ENCODE measurements at regions of chr1 and their contacts with region 1.

Region 1: GRCh38 chr1:24201941-24202440 is 14.9 kb upstream of the IFNLR1 start:
- DNase-seq: peak; percentile 56 to 93
- H3K4me3 ChIP-seq: no peak overlapping the region
- H3K27ac ChIP-seq: no peak overlapping the region
- H3K4me1 ChIP-seq: peaks cover 0 to 4% (median 2%) of the 10 kb centered on the region in 4 experiments; a peak in 2 of 7 replicates
- H3K27me3 ChIP-seq: no peaks in the 10 kb centered on the region
- CTCF ChIP-seq: peak; percentile 66 to 91 (median 83)
- EP300 ChIP-seq: no peak
- POLR2A ChIP-seq: no peak
- RAD21 ChIP-seq: peak; percentile 94 to 95

Region 2: DNA sequence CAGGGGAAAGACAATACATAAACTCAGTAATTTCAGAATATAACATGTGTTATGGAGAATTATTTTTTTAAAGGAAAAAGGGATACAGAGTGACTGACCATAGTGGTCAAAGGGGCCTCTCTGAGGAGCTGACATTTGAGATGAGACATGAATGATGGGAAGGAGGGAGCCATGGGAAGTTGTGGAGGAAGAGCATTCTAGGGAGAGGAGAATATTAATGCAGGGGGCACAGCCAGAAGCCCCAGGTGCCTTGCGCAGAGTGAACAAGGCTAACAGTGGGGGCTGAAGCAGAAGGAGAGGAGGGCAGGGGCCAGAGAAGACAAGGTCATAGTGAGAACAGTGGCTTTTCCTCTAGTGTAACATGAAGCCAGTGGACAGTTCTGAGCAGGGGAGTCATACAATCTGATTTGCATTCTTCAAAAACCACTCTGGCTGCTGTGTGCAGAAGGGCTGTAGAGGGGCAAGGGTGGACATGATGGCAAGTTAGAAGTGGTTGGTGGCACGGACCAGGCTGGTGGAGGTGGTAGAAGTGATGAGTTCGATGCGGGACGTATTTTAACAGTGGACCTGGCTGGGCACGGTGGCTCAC is 13.3 kb after region 1 on chr1:
- CTCF ChIA-PET with region 1: interaction called, 37 read pairs
- POLR2A ChIA-PET with region 1: no interaction called
- DNase-seq: no peak
- H3K4me3 ChIP-seq: no peak overlapping the region
- H3K27ac ChIP-seq: no peak overlapping the region
- H3K4me1 ChIP-seq: peaks cover 0 to 6% (median 2%) of the 10 kb centered on the region in 4 experiments; a peak in 3 of 7 replicates
- H3K27me3 ChIP-seq: no peaks in the 10 kb centered on the region
- CTCF ChIP-seq: no peak
- EP300 ChIP-seq: no peak
- POLR2A ChIP-seq: no peak
- RAD21 ChIP-seq: no peak

Region 3: DNA sequence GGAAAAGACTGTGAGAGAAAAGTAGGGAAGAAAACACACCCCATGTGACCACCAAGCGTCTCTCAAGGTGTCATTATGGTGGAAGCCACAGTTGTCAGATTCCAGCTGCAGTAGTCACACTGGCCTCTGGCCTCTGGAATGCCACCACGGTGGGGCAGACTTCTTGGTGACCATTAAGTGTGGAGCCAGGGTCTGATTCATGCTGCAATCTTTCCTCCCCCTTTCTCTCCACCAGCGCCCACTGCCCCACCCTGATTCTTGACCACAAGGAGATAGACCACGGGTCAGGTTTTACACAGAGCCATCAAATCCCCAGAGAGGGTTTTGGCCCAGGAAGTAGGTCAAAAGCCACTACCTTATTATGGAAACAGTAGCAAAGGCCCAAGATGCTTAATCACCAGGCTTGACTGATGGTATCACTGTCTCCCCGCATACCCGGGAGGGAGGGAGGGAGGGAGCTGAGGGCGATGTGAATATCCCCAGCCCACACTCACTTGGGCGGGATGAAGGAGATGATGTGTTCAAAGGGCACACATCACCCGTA is 64.5 kb after region 1 on chr1:
- CTCF ChIA-PET with region 1: interaction called, 12 read pairs
- POLR2A ChIA-PET with region 1: no interaction called
- DNase-seq: no peak
- H3K4me3 ChIP-seq: no peak overlapping the region
- H3K27ac ChIP-seq: no peak overlapping the region
- H3K4me1 ChIP-seq: no peaks in the 10 kb centered on the region
- H3K27me3 ChIP-seq: no peaks in the 10 kb centered on the region
- CTCF ChIP-seq: no peak
- EP300 ChIP-seq: no peak
- POLR2A ChIP-seq: no peak
- RAD21 ChIP-seq: no peak

Region 4: DNA sequence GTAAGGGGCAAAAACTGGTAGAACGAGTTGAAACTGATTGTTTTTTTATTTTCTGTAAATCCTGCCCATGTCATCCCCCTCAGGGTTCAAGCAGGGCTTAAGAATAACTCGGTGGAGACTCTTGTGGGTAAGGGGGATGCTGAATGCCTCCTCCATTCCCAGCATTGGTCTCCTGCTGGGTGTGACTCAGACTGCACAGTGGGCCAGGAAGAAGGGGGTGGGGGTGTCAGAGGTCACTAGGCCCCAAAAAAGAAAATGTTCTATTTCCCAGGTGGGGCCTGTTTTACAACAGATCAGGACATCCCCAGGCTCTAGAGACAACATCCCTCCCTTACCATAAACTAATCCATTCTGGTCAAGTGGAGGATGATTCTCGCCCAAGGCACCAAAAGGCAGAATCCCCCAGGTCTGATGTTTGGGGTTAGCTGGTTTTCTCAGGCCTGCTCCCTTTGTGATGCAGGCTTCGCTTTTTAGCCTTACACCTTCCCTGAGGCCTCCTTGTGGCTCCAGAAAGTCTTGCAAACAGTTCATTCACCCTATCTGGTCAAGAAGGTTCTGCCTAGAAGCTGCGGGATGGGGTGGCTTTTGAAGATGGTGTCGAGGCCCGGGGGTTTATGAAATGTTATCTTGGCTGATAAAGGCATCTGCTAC is 106.5 kb after region 1 on chr1:
- CTCF ChIA-PET with region 1: interaction called, 56 read pairs
- POLR2A ChIA-PET with region 1: interaction called, 3 read pairs
- DNase-seq: peak in 1 of 2 experiments; percentile 63
- H3K4me3 ChIP-seq: no peak overlapping the region
- H3K27ac ChIP-seq: peak overlapping the region; percentile 57; the same call in 1 of the 2 replicates
- H3K4me1 ChIP-seq: peaks cover 5 to 36% (median 28%) of the 10 kb centered on the region in 4 experiments; a peak in 6 of 7 replicates
- H3K27me3 ChIP-seq: no peaks in the 10 kb centered on the region
- CTCF ChIP-seq: peak; percentile 26 to 70 (median 69)
- EP300 ChIP-seq: no peak
- POLR2A ChIP-seq: no peak
- RAD21 ChIP-seq: peak; percentile 51 to 68

Region 5: DNA sequence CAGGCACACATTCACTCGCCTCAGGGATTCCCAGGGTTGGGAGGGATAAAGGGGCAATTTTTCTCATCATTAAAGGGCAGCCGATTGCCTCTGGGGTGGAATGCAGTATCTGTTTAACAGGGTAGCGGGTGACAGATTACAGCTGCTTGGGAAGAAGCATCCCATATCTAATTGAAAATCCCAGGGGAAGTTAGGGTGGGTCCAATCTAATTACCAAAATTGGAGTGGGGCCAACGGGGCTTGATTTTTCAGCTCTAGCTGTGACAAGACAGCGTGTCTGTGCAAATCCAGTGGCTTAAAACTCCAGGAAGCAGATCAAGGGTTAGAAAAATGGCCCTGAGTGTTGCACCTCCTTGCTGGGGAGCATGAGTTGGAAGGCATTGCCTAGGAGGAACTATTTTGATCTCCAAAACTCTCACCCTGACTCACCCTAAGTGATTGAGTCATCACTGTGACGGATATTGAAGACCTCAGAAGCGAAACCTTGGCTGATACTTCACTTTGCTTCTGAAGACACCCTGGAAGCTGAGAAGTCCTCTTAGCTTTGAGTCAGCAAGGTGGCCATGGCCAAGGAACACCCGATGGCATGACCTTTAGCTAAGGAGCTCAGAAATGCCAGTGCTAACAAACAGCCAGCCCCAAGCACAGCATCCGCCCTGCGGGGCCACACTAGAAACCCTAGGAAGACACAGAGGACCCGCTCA is 163.1 kb after region 1 on chr1:
- CTCF ChIA-PET with region 1: interaction called, 34 read pairs
- POLR2A ChIA-PET with region 1: no interaction called
- DNase-seq: no peak
- H3K4me3 ChIP-seq: no peak overlapping the region
- H3K27ac ChIP-seq: no peak overlapping the region
- H3K4me1 ChIP-seq: no peaks in the 10 kb centered on the region; a peak in 2 of 7 replicates
- H3K27me3 ChIP-seq: no peaks in the 10 kb centered on the region
- CTCF ChIP-seq: no peak
- EP300 ChIP-seq: no peak
- POLR2A ChIP-seq: no peak
- RAD21 ChIP-seq: no peak

Region 6: GRCh38 chr1:24403806-24404205 is 201.8 kb after region 1 on chr1:
- CTCF ChIA-PET with region 1: interaction called, 45 read pairs
- POLR2A ChIA-PET with region 1: no interaction called
- DNase-seq: no peak
- H3K4me3 ChIP-seq: no peak overlapping the region
- H3K27ac ChIP-seq: no peak overlapping the region
- H3K4me1 ChIP-seq: no peaks in the 10 kb centered on the region
- H3K27me3 ChIP-seq: no peaks in the 10 kb centered on the region
- CTCF ChIP-seq: no peak
- EP300 ChIP-seq: no peak
- POLR2A ChIP-seq: no peak
- RAD21 ChIP-seq: no peak